Adrenal gland (tissue), 19 donors: ENCODE measurements at regions of chr6 and their contacts with region 1.

Region 1: GRCh38 chr6:139364302-139364981 is 10.0 kb downstream of the CITED2 start:
- DNase-seq: no peak
- H3K4me3 ChIP-seq: no peak overlapping the region
- H3K27ac ChIP-seq: no peak overlapping the region
- H3K4me1 ChIP-seq: peaks cover 0 to 8% of the 10 kb centered on the region in 2 donors
- H3K27me3 ChIP-seq: no peaks in the 10 kb centered on the region
- CTCF ChIP-seq: peak; percentile 64 to 94 (median 86)
- POLR2A ChIP-seq: no peak

Region 2: DNA sequence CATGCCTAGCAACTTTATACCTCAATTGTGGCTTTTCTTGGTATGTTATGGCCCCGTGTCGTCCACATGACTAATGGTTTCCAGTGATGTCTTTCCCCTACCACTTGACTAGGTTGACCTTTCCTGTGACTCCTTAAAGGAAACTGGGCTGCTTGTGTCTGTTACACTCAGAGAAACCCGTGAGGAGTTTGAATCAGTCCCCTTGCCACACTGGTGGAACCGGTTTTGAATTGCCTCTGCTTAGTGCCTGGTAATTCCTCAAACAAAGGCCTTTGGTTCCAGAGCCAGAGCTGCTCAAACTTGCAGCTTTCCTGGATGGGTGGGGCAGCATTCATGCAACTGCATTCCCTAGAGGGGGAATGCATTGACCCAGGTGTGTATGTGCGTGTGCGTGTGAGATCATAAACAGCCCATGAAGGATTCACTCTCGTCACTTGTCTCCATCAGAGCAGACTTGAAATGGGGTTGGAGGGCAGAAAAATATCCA is 546.6 kb before region 1 on chr6:
- intact Hi-C with region 1: loop called (anchors 5 to 10 kb)
- DNase-seq: no peak
- H3K4me3 ChIP-seq: no peak overlapping the region
- H3K27ac ChIP-seq: no peak overlapping the region
- H3K4me1 ChIP-seq: no peaks in the 10 kb centered on the region
- H3K27me3 ChIP-seq: no peaks in the 10 kb centered on the region
- CTCF ChIP-seq: no peak
- POLR2A ChIP-seq: no peak

Region 3: DNA sequence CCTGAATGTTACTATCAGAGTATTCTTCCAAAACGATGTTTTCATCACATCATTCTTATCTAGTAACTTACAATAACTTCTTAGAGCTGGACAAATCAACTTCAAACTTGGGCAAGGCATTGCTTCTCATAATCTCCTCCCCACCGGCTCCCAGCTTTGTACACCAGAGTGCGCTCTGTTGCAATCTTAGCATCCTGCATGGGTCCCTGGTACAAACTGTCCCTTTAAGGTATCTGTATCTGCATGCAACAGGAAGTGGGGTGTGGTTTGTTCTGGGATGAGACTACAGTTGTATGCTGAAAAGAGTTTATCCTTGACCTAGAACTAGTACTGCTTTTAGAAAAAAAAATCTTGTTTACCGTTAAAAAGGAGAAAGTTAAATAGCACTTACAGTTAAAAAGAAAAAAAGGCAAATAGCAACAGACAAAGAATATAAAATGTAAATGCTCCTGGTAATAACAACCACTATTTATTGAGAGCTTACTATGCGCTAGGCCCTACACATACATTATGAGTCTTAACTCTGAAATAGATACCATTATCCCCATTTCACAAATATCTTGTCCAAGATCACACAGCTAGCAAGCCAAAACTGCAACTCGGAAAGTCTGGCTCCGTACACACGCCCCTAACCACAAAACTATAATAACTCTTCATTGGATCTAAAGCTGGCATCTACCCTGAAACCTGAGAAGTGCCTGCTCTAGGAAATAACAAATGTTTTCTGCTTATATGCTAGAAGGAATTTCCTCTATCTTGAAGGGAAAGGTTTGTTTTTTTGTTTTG is 239.4 kb before region 1 on chr6:
- intact Hi-C with region 1: loop called (anchors 5 to 10 kb)
- DNase-seq: peak; percentile 55 to 89 (median 77)
- H3K4me3 ChIP-seq: no peak overlapping the region
- H3K27ac ChIP-seq: peak overlapping the region in 3 of 5 donors; percentile 19 to 50 (median 29)
- H3K4me1 ChIP-seq: peaks cover 11% of the 10 kb centered on the region in 2 donors
- H3K27me3 ChIP-seq: no peaks in the 10 kb centered on the region
- CTCF ChIP-seq: peak in 4 of 6 experiments; percentile 36 to 52 (median 47)
- POLR2A ChIP-seq: no peak

Region 4: GRCh38 chr6:139134817-139135581 is 229.4 kb before region 1 on chr6 and contains the start of gene HECA:
- intact Hi-C with region 1: loop called in 1 of 2 experiments (anchors 10 kb)
- DNase-seq: peak; percentile 97 to 99 (median 98)
- H3K4me3 ChIP-seq: peak within 1 kb of the TSS in 3 of 4 donors; percentile 54 to 96 (median 63)
- H3K27ac ChIP-seq: peak within 1 kb of the TSS; percentile 81 to 97 (median 92)
- H3K4me1 ChIP-seq: peaks cover 8 to 16% of the 10 kb centered on the region in 2 donors
- H3K27me3 ChIP-seq: no peaks in the 10 kb centered on the region
- CTCF ChIP-seq: peak in 3 of 6 experiments; percentile 1 to 13 (median 8)
- POLR2A ChIP-seq: peak; percentile 85 to 91
- total RNA-seq, gene HECA: 7.8 to 30.0 (median 24.2) TPM

Region 5: DNA sequence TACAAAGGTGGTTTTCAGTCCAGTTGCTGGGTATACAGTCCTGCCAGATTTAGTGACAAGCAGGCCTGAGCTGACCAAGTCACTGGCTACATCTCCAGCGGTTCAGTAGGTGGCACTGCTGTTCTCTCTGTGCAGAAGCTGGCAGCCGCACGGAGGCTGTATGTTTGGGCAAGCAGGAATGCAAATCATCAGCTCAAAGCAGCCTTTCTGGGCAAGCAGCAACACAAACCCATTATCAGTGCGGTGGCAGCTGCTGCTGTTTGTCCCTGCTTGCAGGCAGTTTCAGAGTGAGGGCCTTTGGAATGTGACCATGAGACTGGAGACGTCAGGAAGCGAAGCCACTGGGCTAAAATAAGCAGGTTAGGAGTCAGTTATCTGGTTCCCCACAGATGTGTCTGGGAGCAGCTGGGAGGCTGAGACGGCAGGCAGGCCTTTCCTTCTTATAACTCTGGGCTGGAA is 145.1 kb before region 1 on chr6:
- intact Hi-C with region 1: loop called (anchors 5 kb)
- DNase-seq: peak; percentile 78 to 96 (median 92)
- H3K4me3 ChIP-seq: no peak overlapping the region
- H3K27ac ChIP-seq: peak overlapping the region in 2 of 5 donors; percentile 26 to 64
- H3K4me1 ChIP-seq: peaks cover 0 to 5% of the 10 kb centered on the region in 2 donors
- H3K27me3 ChIP-seq: no peaks in the 10 kb centered on the region
- CTCF ChIP-seq: peak; percentile 59 to 93 (median 87)
- POLR2A ChIP-seq: peak in 1 of 2 donors; percentile 32

Region 6: DNA sequence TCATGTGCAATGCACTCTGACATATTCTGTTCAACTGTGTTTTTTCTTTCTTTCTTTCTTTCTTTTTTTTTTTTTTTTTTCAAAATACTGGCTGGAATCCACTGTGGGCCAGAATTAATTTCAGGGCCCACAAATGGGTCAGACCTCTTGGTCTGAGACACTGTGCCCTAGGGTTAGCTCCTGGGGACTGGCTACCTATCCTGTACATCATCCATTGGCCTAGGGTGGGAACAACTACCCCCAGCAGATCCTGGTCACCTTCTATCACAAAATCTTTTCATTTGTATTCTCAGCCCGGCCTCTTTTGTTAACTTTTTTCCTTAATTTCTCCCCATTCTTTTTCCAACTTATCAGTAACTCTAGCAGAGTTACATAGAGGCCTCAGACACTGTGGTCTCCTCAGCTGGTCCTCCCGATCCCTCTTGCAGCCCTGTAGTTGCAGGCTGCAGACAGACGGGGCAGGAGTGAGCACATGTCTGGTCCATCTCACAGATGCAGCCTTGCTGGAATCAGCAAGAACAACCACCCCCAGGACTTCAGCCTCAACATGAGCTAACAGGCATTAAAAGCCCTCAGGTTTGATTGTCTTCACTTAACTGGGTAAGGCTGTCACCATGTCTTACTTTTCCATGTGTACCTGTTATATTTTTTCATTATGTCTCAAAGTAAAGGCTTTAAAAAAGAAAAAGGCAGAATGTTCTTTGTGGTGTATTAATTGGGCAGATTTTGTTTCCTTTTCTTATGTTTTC is 114.0 kb before region 1 on chr6:
- intact Hi-C with region 1: no loop called
- DNase-seq: peak; percentile 40 to 75 (median 64)
- H3K4me3 ChIP-seq: no peak overlapping the region
- H3K27ac ChIP-seq: no peak overlapping the region
- H3K4me1 ChIP-seq: peaks cover 10 to 19% of the 10 kb centered on the region in 2 donors
- H3K27me3 ChIP-seq: no peaks in the 10 kb centered on the region
- CTCF ChIP-seq: peak; percentile 43 to 63 (median 55)
- POLR2A ChIP-seq: no peak

Region 7: GRCh38 chr6:139944976-139945375 is 580.5 kb after region 1 on chr6:
- intact Hi-C with region 1: no loop called
- DNase-seq: no peak
- H3K4me3 ChIP-seq: no peak overlapping the region
- H3K27ac ChIP-seq: no peak overlapping the region
- H3K4me1 ChIP-seq: peaks cover 0 to 8% of the 10 kb centered on the region in 2 donors
- H3K27me3 ChIP-seq: no peaks in the 10 kb centered on the region
- CTCF ChIP-seq: no peak
- POLR2A ChIP-seq: no peak